ENCODE measurements at regions of chr10 and their contacts with region 1.

Region 1: GRCh38 chr10:90352288-90352687 is 505.6 kb downstream of the HTR7 start:
- DNase-seq: no peak
- ATAC-seq: no peak
- H3K4me3 ChIP-seq: no peak overlapping the region
- H3K4me3 Mint-ChIP-seq: no peak overlapping the region
- H3K27ac ChIP-seq: no peak overlapping the region
- H3K27ac Mint-ChIP-seq: no peak overlapping the region
- H3K4me1 ChIP-seq: no peaks in the 10 kb centered on the region
- H3K4me1 Mint-ChIP-seq: no peaks in the 10 kb centered on the region
- H3K27me3 ChIP-seq: peaks cover 0 to 2% of the 10 kb centered on the region in 2 experiments
- H3K27me3 Mint-ChIP-seq: peaks cover 0 to 3% of the 10 kb centered on the region in 2 donors

Region 2: DNA sequence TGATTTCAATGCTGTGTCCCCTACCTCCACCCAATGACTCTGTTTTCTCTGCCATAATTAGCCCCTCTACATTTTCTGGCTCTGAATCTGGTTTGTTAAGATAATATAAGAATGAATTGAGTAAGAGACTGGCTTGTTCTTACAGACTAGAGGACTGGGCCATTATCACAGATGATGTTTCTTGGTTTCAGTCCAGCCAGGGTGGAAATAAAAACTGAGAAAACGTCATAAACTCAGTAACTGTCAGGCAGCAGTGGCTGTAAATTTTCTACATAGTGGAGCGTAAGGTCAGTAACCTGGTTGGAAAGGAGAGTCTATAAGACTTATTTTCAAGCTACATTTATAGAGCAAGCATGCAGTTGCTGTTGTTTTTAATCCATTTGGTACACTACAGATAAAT is 20.2 kb after region 1 on chr10:
- CTCF ChIA-PET with region 1: interaction called in 1 of 2 experiments, 11 read pairs
- POLR2A ChIA-PET with region 1: no interaction called
- DNase-seq: no peak
- ATAC-seq: no peak
- H3K4me3 ChIP-seq: no peak overlapping the region
- H3K4me3 Mint-ChIP-seq: no peak overlapping the region
- H3K27ac ChIP-seq: no peak overlapping the region
- H3K27ac Mint-ChIP-seq: no peak overlapping the region
- H3K4me1 ChIP-seq: no peaks in the 10 kb centered on the region
- H3K4me1 Mint-ChIP-seq: no peaks in the 10 kb centered on the region
- H3K27me3 ChIP-seq: no peaks in the 10 kb centered on the region
- H3K27me3 Mint-ChIP-seq: peaks cover 0 to 3% of the 10 kb centered on the region in 2 donors

Measured in T-cell (primary cell).